Heart right ventricle (tissue), 16 donors: ENCODE measurements at regions of chr2 and their contacts with region 1.

Region 1: DNA sequence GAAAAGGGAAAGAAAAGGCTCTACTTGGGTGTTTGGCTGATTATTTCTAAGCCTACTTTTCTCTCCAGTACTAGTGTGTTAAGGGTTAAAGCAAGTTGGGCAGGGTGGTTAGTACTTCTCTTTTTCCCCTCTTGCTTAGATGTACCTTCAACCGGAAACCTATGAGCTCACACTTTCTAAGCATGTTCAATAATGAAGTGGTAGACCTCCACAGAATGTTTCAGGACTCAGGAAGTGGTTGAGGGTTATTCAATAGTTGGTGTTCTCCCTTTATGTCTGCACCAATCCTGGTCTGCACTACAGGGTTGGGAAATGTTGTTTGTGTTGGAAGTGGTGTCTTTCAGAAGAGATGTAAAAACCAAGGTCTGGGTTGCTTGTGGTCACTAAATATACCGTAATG is 137.1 kb downstream of the ZEB2 start:
- DNase-seq: no peak
- ATAC-seq: peak in 6 of 8 donors; percentile 10 to 50 (median 33)
- H3K4me3 ChIP-seq: no peak overlapping the region
- H3K27ac ChIP-seq: peak overlapping the region in 2 of 10 donors; percentile 7 to 32
- H3K4me1 ChIP-seq: peaks cover 0 to 66% (median 11%) of the 10 kb centered on the region in 9 donors
- H3K27me3 ChIP-seq: no peaks in the 10 kb centered on the region
- CTCF ChIP-seq: no peak

Region 2: DNA sequence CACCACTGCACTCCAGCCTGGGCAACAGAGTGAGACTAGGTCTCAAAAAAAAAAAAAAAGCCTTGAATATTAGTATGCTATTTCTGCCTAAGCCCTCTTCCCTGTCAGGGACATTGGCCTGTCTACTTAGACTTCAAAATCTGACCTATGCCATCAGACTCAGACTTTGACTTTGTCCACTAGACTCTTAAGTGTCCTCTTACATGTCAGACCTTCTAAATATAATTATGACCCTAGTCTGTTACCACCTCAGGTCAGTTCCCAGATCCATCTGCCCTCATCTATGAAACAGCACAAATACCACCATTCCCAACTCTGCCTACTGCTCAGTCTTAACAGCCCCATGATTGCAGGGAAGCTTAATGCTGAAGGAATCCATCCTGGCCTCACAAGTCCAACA is 107.5 kb before region 1 on chr2:
- intact Hi-C with region 1: no loop called
- DNase-seq: no peak
- ATAC-seq: peak in 1 of 8 donors; percentile 52
- H3K4me3 ChIP-seq: no peak overlapping the region
- H3K27ac ChIP-seq: no peak overlapping the region
- H3K4me1 ChIP-seq: peaks cover 0 to 19% (median 6%) of the 10 kb centered on the region in 9 donors
- H3K27me3 ChIP-seq: no peaks in the 10 kb centered on the region
- CTCF ChIP-seq: no peak

Region 3: GRCh38 chr2:144332356-144333142 is 50.3 kb before region 1 on chr2:
- intact Hi-C with region 1: loop called in 1 of 10 experiments (anchors 5 kb)
- DNase-seq: peak; percentile 80 to 90
- ATAC-seq: peak; percentile 94 to 98 (median 95)
- H3K4me3 ChIP-seq: peak overlapping the region in 9 of 10 donors; percentile 58 to 97 (median 89)
- H3K27ac ChIP-seq: peak overlapping the region; percentile 78 to 96 (median 92)
- H3K4me1 ChIP-seq: peaks cover 0 to 22% (median 16%) of the 10 kb centered on the region in 9 donors
- H3K27me3 ChIP-seq: no peaks in the 10 kb centered on the region
- CTCF ChIP-seq: no peak

Region 4: GRCh38 chr2:145752091-145752806 is 1369.4 kb after region 1 on chr2:
- intact Hi-C with region 1: loop called in 1 of 10 experiments (anchors 10 kb)
- DNase-seq: peak in 1 of 2 donors; percentile 26
- ATAC-seq: peak; percentile 64 to 86 (median 82)
- H3K4me3 ChIP-seq: peak overlapping the region in 3 of 10 donors; percentile 8 to 21 (median 19)
- H3K27ac ChIP-seq: peak overlapping the region in 8 of 10 donors; percentile 27 to 81 (median 50)
- H3K4me1 ChIP-seq: peaks cover 0 to 40% (median 20%) of the 10 kb centered on the region in 9 donors
- H3K27me3 ChIP-seq: no peaks in the 10 kb centered on the region
- CTCF ChIP-seq: peak; percentile 25 to 70 (median 64)